Calu3 (cell line): ENCODE measurements at regions of chr5 and their contacts with region 1.

Region 1: GRCh38 chr5:151115274-151115905 is 34.6 kb upstream of the TNIP1 start:
- DNase-seq: peak; percentile 90
- H3K4me3 Mint-ChIP-seq: no peak overlapping the region
- H3K27ac Mint-ChIP-seq: no peak overlapping the region
- H3K4me1 Mint-ChIP-seq: peaks cover 9% of the 10 kb centered on the region
- H3K27me3 Mint-ChIP-seq: no peaks in the 10 kb centered on the region
- CTCF ChIP-seq: peak; percentile 98

Region 2: DNA sequence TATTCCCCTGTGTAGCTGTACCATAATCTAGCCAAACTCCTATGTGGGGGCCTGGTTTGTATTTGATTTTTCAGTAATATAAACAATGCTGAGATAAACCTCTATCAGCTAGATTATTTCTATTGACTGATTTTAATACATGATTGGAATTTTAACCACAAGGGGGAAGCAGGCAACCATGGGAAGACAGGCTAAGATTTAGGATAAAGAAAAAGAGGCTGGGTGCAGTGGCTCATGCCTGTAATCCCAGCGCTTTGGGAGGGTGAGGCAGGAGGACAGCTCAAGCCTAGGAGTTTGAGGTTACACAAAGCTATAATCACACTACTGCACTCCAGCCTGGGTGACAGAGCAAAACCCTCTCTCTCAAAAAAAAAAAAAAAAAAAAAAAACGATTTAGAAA is 113.1 kb before region 1 on chr5:
- CTCF ChIA-PET with region 1: interaction called, 7 read pairs
- intact Hi-C with region 1: loop called (anchors 1 kb)
- DNase-seq: peak; percentile 52
- H3K4me3 Mint-ChIP-seq: no peak overlapping the region
- H3K27ac Mint-ChIP-seq: no peak overlapping the region
- H3K4me1 Mint-ChIP-seq: no peaks in the 10 kb centered on the region
- H3K27me3 Mint-ChIP-seq: peaks cover 26% of the 10 kb centered on the region
- CTCF ChIP-seq: no peak

Region 3: GRCh38 chr5:151051066-151051930 is 64.1 kb before region 1 on chr5:
- CTCF ChIA-PET with region 1: interaction called, 140 read pairs
- intact Hi-C with region 1: loop called (anchors 1 kb)
- DNase-seq: peak; percentile 86
- H3K4me3 Mint-ChIP-seq: no peak overlapping the region
- H3K27ac Mint-ChIP-seq: peak overlapping the region; percentile 2
- H3K4me1 Mint-ChIP-seq: peaks cover 65% of the 10 kb centered on the region
- H3K27me3 Mint-ChIP-seq: no peaks in the 10 kb centered on the region
- CTCF ChIP-seq: peak; percentile 88

Region 4: DNA sequence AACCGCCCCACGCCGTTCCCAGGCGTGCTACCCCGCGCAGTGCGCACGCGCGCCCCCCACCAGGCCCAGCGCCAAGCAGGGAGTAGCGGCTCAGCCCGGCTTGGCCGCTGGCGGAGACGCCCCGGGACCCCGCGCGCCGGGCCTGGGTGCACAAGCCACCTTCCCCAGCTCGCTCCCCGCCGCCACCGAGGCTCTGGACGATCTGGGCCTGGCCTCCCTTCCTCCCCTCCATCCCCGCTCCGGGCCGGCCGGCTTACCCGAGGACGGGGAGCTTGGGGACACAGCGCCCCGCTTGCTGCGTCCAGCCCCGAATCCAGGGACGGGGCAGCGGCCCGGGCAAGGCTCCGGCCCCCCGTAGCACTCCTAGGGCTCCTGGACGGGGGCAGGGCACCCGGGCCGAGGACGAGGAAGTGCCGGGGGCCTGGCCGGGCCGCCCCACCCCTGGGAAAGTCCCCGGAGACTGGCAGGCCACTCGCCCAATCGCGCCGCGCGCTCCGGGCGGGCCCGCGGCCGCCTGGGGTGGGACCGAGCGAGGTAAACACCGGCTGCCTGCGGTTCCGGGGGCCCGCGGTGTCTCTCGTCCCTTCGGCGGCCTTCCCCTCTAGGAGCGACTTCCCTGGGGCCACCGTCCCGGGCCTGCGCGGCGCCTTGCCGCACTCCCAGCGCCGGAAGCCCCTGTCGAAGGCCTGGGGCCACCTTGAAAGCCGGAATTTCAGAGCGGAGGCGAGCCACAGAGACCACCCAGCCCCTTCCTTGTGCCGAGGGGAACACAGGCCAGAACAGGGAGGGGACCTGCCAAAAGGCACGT is 34.6 kb before region 1 on chr5 and contains the start of gene TNIP1:
- CTCF ChIA-PET with region 1: interaction called, 13 read pairs
- intact Hi-C with region 1: loop called (anchors 2 kb)
- DNase-seq: peak; percentile 99
- H3K4me3 Mint-ChIP-seq: peak within 1 kb of the TSS; percentile 75
- H3K27ac Mint-ChIP-seq: peak within 1 kb of the TSS; percentile 85
- H3K4me1 Mint-ChIP-seq: peaks cover 83% of the 10 kb centered on the region
- H3K27me3 Mint-ChIP-seq: no peaks in the 10 kb centered on the region
- CTCF ChIP-seq: no peak
- total RNA-seq, gene TNIP1: 321 and 339 TPM in 2 replicates

Region 5: GRCh38 chr5:151093476-151093889 is 21.9 kb before region 1 on chr5:
- CTCF ChIA-PET with region 1: interaction called, 11 read pairs
- intact Hi-C with region 1: no loop called
- DNase-seq: peak; percentile 42
- H3K4me3 Mint-ChIP-seq: peak overlapping the region; percentile 26
- H3K27ac Mint-ChIP-seq: peak overlapping the region; percentile 86
- H3K4me1 Mint-ChIP-seq: peaks cover 70% of the 10 kb centered on the region
- H3K27me3 Mint-ChIP-seq: no peaks in the 10 kb centered on the region
- CTCF ChIP-seq: no peak